Dendritic cell treated with granulocyte-macrophage colony-stimulating factor and Interleukin-4, amounts not matched to agents 40 ng/mL and 50 ng/mL, for 4 days (primary cell): ENCODE measurements at regions of chr9 and their contacts with region 1.

Region 1: GRCh38 chr9:96449845-96450612 is at the start of gene HABP4:
- H3K4me3 Mint-ChIP-seq: peak within 1 kb of the TSS; percentile 74
- H3K27ac Mint-ChIP-seq: peak within 1 kb of the TSS; percentile 62
- H3K4me1 Mint-ChIP-seq: peaks cover 19% of the 10 kb centered on the region
- H3K27me3 Mint-ChIP-seq: peaks cover 60% of the 10 kb centered on the region

Region 2: GRCh38 chr9:96418074-96418809 is 31.8 kb before region 1 on chr9 and contains the start of gene ZNF367:
- intact Hi-C with region 1: loop called (anchors 1 kb)
- H3K4me3 Mint-ChIP-seq: peak within 1 kb of the TSS; percentile 85
- H3K27ac Mint-ChIP-seq: peak within 1 kb of the TSS; percentile 97
- H3K4me1 Mint-ChIP-seq: peaks cover 32% of the 10 kb centered on the region
- H3K27me3 Mint-ChIP-seq: no peaks in the 10 kb centered on the region

Region 3: GRCh38 chr9:96566498-96567207 is 116.6 kb after region 1 on chr9:
- intact Hi-C with region 1: loop called (anchors 10 kb)
- H3K4me3 Mint-ChIP-seq: peak overlapping the region; percentile 84
- H3K27ac Mint-ChIP-seq: peak overlapping the region; percentile 88
- H3K4me1 Mint-ChIP-seq: peaks cover 10% of the 10 kb centered on the region
- H3K27me3 Mint-ChIP-seq: peaks cover 41% of the 10 kb centered on the region